ENCODE measurements at regions of chr5 and their contacts with region 1.

Region 1: DNA sequence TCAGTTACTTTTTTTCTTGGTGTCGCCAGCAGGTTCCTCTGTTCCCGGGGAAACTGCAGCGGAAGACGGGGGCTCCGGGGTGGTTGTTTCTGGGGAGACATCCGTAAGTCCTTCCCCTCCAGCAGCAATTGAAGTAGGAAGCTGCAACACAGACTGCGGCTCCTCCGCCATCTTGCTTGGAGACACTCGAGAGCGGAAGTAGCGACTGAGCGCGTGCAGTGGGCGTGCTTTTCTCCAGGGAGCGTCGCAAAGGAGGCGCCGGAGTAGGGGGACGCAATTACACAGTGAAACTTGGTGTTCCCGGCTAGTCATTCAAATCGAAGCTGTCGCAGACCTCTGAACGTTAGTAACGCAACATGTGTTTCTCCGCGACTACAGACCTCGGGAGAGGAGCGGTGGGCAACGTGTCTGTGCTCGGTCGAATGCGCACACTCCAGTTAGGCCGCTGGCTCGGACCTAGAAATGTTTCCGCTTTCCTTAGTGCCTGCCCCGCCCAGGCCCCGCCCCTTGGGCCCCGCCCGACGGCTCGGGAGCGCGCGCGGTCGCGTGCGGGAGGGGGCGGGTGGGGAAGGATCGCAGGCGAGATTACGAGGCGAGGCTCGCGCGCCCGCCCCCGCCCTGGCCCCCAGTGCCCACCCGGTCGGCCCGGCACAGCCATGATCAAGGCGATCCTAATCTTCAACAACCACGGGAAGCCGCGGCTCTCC is at the starts of genes AP3S1 and ATG12:
- DNase-seq: peak; percentile 81 to 89
- H3K4me3 ChIP-seq: peak within 1 kb of the TSS; percentile 88
- H3K27ac ChIP-seq: peak within 1 kb of the TSS; percentile 89
- H3K4me1 ChIP-seq: peaks cover 35% of the 10 kb centered on the region
- H3K27me3 ChIP-seq: no peaks in the 10 kb centered on the region
- CTCF ChIP-seq: no peak; the same call in 1 of the 2 replicates
- total RNA-seq, gene AP3S1: 38.8 and 49.1 TPM in 2 replicates
- total RNA-seq, gene ATG12: 39.8 and 48.7 TPM in 2 replicates

Region 2: DNA sequence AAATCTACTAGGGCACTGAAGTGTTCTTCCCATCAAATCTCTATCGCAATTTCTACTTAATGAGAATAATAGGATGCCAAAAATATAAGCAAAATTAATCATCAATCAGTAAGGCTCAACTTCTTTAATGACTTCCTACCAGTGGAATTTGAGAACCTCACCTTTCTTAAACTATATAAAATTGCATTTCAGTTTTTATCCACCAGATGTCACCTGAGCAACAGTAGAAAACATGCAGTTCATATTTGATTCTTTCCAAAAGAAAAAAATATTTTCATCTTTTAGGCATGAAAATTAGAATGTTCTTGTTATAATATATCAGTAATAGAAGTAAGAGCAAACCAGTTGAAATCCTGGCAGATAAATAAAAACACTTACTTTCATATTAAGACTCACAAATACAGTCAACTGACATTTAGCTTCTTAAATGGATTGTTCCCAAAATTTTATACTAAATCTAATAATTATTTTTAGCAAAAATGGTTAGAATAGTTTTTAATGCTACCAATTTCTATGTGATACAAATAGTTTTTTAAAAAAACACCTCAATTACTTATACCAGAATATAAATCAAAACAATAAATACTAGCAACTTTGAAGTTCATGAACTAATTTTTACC is 531.7 kb before region 1 on chr5:
- CTCF ChIA-PET with region 1: interaction called, 4 read pairs
- POLR2A ChIA-PET with region 1: no interaction called
- intact Hi-C with region 1: loop called (anchors 5 kb)
- DNase-seq: peak in 1 of 2 experiments; percentile 68
- H3K4me3 ChIP-seq: no peak overlapping the region
- H3K27ac ChIP-seq: no peak overlapping the region
- H3K4me1 ChIP-seq: peaks cover 21% of the 10 kb centered on the region
- H3K27me3 ChIP-seq: no peaks in the 10 kb centered on the region
- CTCF ChIP-seq: peak; percentile 85

Region 3: DNA sequence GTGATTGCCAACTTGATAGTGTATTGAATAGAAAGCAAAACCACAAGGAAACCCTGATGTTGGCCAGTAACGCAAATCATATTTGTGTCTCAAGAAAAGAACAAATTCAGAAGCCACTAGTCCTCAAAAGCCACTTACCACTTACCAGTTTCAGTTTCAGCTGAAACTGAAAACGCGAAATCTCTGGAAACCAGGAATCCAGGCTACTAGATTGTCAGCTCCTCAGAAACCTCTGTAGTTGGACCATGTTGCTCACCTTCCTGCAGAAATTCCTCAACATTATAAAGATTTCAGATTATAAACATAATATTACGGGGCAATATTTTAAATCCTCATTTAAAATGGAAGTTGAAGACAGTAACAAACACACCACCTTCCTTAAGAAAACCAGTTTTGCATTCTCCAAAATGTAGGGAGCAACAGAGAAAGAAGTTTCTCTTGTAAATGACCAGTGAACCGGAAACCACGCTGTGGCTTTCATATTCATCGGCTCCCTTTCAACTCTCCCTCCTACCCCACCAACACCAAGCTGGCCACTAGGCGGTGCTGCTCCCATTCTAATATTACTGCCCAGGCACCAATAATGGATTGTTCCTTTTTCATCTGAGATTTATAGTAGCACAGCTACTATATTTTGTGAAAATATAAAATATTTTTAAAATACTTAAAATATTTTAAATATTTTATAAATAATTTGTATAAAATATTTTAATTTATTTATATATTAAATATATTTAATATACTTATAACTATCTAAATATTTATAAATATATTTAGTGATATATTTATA is 207.0 kb before region 1 on chr5:
- CTCF ChIA-PET with region 1: no interaction called
- POLR2A ChIA-PET with region 1: no interaction called
- intact Hi-C with region 1: loop called (anchors 2 kb)
- DNase-seq: peak; percentile 53 to 82
- H3K4me3 ChIP-seq: peak overlapping the region; percentile 37; the same call in 1 of the 2 replicates
- H3K27ac ChIP-seq: peak overlapping the region; percentile 11; the same call in 1 of the 2 replicates
- H3K4me1 ChIP-seq: peaks cover 7% of the 10 kb centered on the region
- H3K27me3 ChIP-seq: no peaks in the 10 kb centered on the region
- CTCF ChIP-seq: peak; percentile 86

Region 4: DNA sequence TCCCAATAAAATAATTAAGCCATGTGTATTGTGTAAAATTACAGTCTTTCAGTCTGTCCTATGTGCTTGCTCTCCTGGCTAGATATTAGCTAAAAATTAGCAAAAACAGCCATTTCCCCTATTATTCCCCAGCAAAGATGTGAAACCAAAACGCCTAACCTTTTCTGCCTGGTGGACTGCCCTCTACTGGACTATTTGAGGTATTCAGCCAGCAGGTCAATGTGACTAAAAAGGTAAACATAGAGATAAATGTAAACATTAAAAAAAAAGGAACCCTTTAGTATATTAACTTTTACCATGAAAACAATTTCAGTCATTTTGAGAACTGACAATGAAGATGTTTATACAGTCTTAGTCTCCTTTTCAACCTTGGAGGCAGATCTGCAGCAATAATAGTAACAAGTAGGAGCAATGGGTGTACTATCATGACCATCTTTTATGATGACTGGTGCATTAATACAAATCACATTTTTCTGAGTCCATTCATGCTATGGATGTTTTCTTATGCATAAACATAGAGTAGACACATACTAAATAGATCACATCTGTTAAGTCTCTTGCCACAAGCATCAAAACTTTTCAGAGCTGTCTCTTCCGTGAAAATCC is 10.3 kb before region 1 on chr5:
- CTCF ChIA-PET with region 1: no interaction called
- POLR2A ChIA-PET with region 1: no interaction called
- intact Hi-C with region 1: no loop called
- DNase-seq: peak in 1 of 2 experiments; percentile 12
- H3K4me3 ChIP-seq: no peak overlapping the region
- H3K27ac ChIP-seq: no peak overlapping the region
- H3K4me1 ChIP-seq: no peaks in the 10 kb centered on the region
- H3K27me3 ChIP-seq: no peaks in the 10 kb centered on the region
- CTCF ChIP-seq: peak; percentile 82

Region 5: DNA sequence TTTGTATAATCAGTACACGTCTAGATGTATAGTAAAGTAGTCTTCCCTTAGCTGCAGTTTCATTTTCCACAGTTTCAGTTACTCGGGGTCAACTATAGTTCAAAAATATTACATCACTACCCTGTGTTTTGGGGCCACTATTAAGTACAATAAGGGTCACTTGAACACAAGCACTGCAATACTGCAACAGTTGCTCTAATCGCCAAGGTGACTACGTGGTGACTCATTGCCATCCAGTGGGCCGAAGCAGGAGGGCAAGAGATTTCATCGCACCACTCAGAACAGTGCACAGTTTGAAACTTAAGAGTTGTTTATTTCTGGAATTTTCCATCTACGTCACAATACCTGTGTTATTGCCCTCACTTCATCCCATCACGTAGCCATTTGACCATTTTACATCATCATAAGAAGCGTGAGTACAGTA is 190.6 kb after region 1 on chr5 and contains the start of gene ARL14EPL:
- CTCF ChIA-PET with region 1: no interaction called
- POLR2A ChIA-PET with region 1: no interaction called
- intact Hi-C with region 1: loop called (anchors 2 kb)
- DNase-seq: peak; percentile 58 to 74
- H3K4me3 ChIP-seq: peak within 1 kb of the TSS; percentile 42; the same call in 1 of the 2 replicates
- H3K27ac ChIP-seq: peak within 1 kb of the TSS; percentile 81
- H3K4me1 ChIP-seq: peaks cover 19% of the 10 kb centered on the region
- H3K27me3 ChIP-seq: no peaks in the 10 kb centered on the region
- CTCF ChIP-seq: peak; percentile 39; the same call in 1 of the 2 replicates
- total RNA-seq, gene ARL14EPL: 0.37 TPM in 1 of 2 replicates, not detected in the other